ENCODE measurements at regions of chr12 and their contacts with region 1.

Region 1: GRCh38 chr12:48050174-48050573 is 45.9 kb upstream of the COL2A1 start:
- DNase-seq: peak; percentile 46
- ATAC-seq: no peak
- H3K4me3 ChIP-seq: no peak overlapping the region
- H3K27ac ChIP-seq: no peak overlapping the region
- H3K4me1 ChIP-seq: peaks cover 9% of the 10 kb centered on the region; the same call in 1 of the 2 replicates
- H3K27me3 ChIP-seq: no peaks in the 10 kb centered on the region
- CTCF ChIP-seq: no peak

Region 2: GRCh38 chr12:48067250-48067938 is 17.2 kb after region 1 on chr12:
- CTCF ChIA-PET with region 1: no interaction called
- POLR2A ChIA-PET with region 1: no interaction called
- intact Hi-C with region 1: loop called (anchors 2 kb)
- DNase-seq: no peak
- ATAC-seq: no peak
- H3K4me3 ChIP-seq: no peak overlapping the region
- H3K27ac ChIP-seq: no peak overlapping the region
- H3K4me1 ChIP-seq: no peaks in the 10 kb centered on the region; the same call in 1 of the 2 replicates
- H3K27me3 ChIP-seq: no peaks in the 10 kb centered on the region
- CTCF ChIP-seq: no peak

Measured in PC-3 (cell line).